ENCODE measurements at regions of chr1 and their contacts with region 1.

Region 1: DNA sequence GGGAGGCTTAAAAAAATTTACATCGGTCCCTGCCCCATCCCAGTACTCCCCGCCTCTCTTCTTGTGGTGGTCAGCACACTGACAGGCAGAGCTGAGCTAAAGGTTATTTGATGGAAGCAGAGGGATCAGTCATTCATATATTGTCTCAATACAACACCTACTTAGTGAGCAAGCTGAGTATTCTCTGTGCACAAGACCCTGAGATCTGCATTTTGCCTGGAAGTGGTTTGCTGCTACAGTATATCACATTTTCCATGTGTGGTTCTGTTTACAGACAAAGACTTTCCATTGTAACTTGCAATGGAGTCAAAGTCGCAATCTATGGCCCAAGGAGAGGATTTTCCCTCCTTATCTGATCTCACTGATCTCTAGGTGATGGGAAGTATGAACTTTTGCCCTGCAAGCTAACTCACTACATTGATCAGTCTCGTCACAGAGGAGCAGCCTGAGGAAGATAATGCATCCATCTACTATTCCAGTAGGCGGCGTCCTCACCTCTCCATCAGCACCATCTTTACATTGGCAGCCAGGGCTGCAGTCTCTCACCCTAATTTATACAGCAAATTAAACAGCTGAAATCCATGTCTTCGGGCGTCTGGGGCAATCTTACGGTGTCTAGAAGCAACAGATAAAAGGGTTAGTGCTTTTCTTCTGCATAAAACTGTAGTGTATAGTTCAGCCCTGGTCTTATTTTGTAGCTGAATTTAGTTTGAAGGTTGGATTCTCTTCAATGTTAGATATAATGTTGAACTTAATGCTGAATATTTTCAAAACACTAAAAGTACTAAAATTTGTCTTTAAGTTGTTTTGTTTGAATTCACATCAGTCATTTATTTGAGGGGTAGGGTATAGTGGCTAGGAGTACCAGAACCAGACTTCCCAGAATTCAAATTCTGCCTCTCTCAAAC is 3.2 kb upstream of the TRAF5 start:
- DNase-seq: no peak
- ATAC-seq: peak in 1 of 2 donors; percentile 28
- H3K4me3 ChIP-seq: no peak overlapping the region
- H3K27ac ChIP-seq: no peak overlapping the region
- H3K4me1 ChIP-seq: no peaks in the 10 kb centered on the region
- H3K27me3 ChIP-seq: no peaks in the 10 kb centered on the region
- CTCF ChIP-seq: peak in 4 of 5 experiments; percentile 38 to 64 (median 44)
- POLR2A ChIP-seq: no peak

Region 2: GRCh38 chr1:210726621-210727020 is 596.8 kb before region 1 on chr1:
- in situ Hi-C with region 1: no loop called
- intact Hi-C with region 1: no loop called
- DNase-seq: no peak
- ATAC-seq: no peak
- H3K4me3 ChIP-seq: no peak overlapping the region
- H3K27ac ChIP-seq: no peak overlapping the region
- H3K4me1 ChIP-seq: no peaks in the 10 kb centered on the region
- H3K27me3 ChIP-seq: no peaks in the 10 kb centered on the region
- CTCF ChIP-seq: no peak
- POLR2A ChIP-seq: no peak

Region 3: DNA sequence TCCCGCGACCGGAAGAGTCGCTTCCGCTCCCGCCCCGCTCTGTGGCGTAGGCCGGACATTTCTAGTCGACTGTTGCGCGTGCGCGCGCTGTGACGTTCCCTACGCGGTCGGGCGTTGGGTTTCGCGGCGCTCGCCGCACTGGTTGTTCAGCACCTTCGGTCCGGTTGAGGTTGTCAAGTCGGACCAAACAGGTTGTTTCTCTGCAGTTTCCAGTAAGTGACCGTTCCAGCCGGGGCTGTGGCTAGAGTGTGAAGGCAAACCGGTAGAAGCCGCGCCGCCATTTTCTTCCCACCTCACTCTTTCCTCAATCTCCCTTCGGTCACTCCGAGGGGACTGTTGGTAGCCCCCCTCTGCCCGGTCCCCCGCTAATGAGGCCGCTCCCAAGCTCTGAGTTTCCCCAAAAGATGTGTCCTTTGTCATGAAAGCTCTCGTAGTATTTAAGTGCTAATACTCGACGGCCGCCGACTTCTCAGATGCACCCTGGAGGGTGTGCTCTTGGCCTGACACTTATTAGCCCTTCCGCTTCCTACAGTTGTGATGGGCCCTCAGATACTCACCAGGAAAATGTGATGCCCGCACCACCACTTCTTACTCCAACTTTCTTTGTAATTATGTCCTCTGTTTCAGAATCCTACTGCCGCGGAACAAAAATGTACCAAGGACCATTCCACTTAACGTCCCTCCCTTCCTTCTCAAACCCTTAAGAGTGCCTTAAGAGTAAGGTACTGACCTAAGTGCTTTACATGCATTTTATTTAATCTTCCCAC is 59.5 kb after region 1 on chr1:
- in situ Hi-C with region 1: no loop called
- intact Hi-C with region 1: loop called (anchors 2 kb)
- DNase-seq: peak; percentile 73 to 89
- ATAC-seq: peak; percentile 96 to 99
- H3K4me3 ChIP-seq: peak overlapping the region; percentile 75 to 92 (median 88)
- H3K27ac ChIP-seq: peak overlapping the region; percentile 91 to 98 (median 94)
- H3K4me1 ChIP-seq: peaks cover 5 to 8% of the 10 kb centered on the region in 2 donors
- H3K27me3 ChIP-seq: no peaks in the 10 kb centered on the region
- CTCF ChIP-seq: no peak
- POLR2A ChIP-seq: peak; percentile 87

Region 4: GRCh38 chr1:211476200-211476849 is 152.9 kb after region 1 on chr1:
- in situ Hi-C with region 1: loop called in 1 of 4 experiments (anchors 10 kb)
- intact Hi-C with region 1: loop called (anchors 10 kb)
- DNase-seq: peak; percentile 32 to 48
- ATAC-seq: peak in 1 of 2 donors; percentile 45
- H3K4me3 ChIP-seq: no peak overlapping the region
- H3K27ac ChIP-seq: no peak overlapping the region
- H3K4me1 ChIP-seq: peaks cover 0 to 6% of the 10 kb centered on the region in 2 donors
- H3K27me3 ChIP-seq: peaks cover 0 to 17% (median 4%) of the 10 kb centered on the region in 3 donors
- CTCF ChIP-seq: peak; percentile 24 to 77 (median 42)
- POLR2A ChIP-seq: no peak

Measured in gastrocnemius medialis (tissue), 4 donors.